ENCODE measurements at regions of chr3 and their contacts with region 1.

Region 1: GRCh38 chr3:119293871-119294695 is at the start of gene ARHGAP31:
- DNase-seq: peak; percentile 73
- H3K4me3 ChIP-seq: peak within 1 kb of the TSS; percentile 72 to 79 (median 76)
- H3K27ac ChIP-seq: peak within 1 kb of the TSS; percentile 90 to 92 (median 92)
- H3K4me1 ChIP-seq: peaks cover 6 to 37% (median 14%) of the 10 kb centered on the region in 4 donors
- H3K27me3 ChIP-seq: no peaks in the 10 kb centered on the region
- CTCF ChIP-seq: no peak
- EP300 ChIP-seq: no peak
- POLR2A ChIP-seq: peak; percentile 19
- total RNA-seq, gene ARHGAP31: 6.7 to 68.5 (median 9.6) TPM

Region 2: DNA sequence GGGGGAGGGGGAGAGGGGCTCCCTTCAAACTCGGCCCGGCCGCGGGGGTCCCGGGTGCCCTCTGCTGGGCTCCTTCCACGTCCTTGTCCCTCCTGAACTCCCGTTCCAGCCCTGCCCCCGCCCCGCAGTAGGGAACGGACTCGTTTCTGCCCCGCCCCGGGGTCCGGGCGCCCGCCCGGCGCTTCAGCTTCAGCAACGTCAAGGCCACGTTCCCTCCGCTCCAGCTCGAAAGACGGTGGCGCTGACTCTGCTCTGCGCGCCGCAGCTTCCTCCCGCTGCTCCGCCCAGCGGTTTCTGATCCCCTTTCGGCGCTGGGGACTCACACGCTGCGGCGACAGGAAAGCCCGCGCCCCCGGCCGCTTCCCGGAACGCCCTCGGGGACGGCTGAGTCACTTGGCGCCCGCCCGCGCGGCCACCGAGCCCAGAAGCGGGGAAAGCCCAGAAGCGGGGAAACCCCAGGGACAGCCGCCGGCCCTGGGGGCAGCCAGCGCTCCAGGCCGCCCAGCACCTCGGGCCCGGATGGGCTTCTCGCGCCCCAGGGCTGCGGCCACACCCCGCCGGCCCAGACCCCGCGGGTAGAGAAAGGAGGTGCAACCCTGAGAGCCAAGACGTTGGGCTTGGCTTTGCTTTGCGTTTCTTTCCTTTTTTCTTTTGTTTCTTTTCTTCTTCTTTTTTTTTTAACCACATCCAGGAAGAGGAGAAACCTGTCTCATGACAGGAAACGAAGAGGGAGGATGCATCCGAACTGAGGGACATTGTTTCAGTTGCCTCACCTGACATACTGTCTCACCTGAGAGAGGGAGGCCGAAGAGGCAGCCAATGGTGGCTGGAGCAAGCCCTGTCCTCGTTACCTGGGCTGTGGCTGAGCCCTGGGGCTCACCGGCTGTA is 29.0 kb after region 1 on chr3:
- in situ Hi-C with region 1: no loop called
- intact Hi-C with region 1: loop called (anchors 2 kb)
- DNase-seq: peak; percentile 89
- H3K4me3 ChIP-seq: peak overlapping the region; percentile 50 to 68 (median 60)
- H3K27ac ChIP-seq: peak overlapping the region; percentile 87 to 94 (median 92)
- H3K4me1 ChIP-seq: peaks cover 3 to 22% (median 8%) of the 10 kb centered on the region in 4 donors
- H3K27me3 ChIP-seq: no peaks in the 10 kb centered on the region
- CTCF ChIP-seq: no peak
- EP300 ChIP-seq: peak; percentile 50
- POLR2A ChIP-seq: peak; percentile 69

Measured in transverse colon (tissue), 4 donors.